Activated CD8-positive, alpha-beta T cell treated with anti-CD3 and anti-CD28 coated beads, Interleukin-2, amount 10 ng/mL, durations not matched to agents 7 days and 5 days (primary cell): ENCODE measurements at regions of chr17 and their contacts with region 1.

Region 1: DNA sequence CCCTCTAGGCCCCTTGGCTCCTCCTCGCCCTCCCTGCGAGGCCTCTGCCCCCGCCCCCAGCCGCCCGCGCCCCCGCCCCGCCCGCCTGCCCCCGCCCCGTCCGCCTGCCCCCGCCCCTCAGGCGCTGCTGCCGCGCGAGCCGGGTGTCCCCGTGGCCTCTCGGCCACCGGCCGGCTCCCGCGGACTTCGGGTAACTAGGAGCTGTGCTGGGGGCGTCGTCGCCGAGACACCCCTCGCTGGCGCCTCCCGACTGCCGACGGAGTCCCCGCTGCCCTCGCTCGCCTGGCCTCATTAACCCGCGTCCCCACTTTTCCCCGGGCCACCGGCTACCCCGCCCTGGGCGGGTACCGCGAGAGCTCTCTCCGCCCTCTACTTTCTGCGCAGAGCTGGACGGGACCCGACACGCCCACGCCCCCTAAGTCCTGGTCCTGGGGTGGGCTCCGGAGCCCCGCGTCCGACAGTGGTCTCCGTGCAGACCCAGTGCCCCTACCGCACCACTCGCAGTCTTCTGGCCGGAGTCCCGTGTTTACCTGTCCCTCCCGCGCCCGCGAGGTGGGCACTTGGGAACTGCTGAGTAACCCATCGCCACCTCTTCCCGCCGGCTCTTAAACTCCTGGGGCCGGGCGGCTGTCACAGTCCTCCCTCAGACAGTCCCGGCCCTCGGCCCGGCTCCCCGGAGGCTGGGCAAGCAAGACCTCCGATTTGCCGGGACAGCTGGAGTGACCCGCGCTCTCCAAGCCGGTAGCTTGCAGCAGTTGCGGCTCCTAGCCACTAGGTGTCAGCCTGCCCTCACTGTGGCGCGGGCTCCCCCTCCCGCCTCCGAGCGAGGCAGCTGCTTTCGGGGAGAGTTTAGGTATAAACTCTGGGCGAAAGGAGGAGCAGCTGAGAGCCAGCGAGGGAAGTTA is at the start of gene TLCD1:
- DNase-seq: peak; percentile 95
- ATAC-seq: peak; percentile 64
- H3K4me3 Mint-ChIP-seq: peak within 1 kb of the TSS; percentile 94
- H3K27ac Mint-ChIP-seq: peak within 1 kb of the TSS; percentile 99
- H3K4me1 Mint-ChIP-seq: peaks cover 64% of the 10 kb centered on the region
- H3K27me3 Mint-ChIP-seq: no peaks in the 10 kb centered on the region
- total RNA-seq, gene TLCD1: 2.8 to 3.0 TPM

Region 2: GRCh38 chr17:28661635-28662537 is 64.6 kb before region 1 on chr17 and contains the starts of genes SDF2 and SUPT6H:
- CTCF ChIA-PET with region 1: interaction called, 12 read pairs
- POLR2A ChIA-PET with region 1: interaction called, 11 read pairs
- DNase-seq: peak; percentile 96
- ATAC-seq: peak; percentile 90
- H3K4me3 Mint-ChIP-seq: peak within 1 kb of the TSS; percentile 99
- H3K27ac Mint-ChIP-seq: peak within 1 kb of the TSS; percentile 100
- H3K4me1 Mint-ChIP-seq: peaks cover 36% of the 10 kb centered on the region
- H3K27me3 Mint-ChIP-seq: no peaks in the 10 kb centered on the region
- total RNA-seq, gene SDF2: 51.7 to 54.5 TPM
- total RNA-seq, gene SUPT6H: 69.4 to 72.8 TPM

Region 3: GRCh38 chr17:28763804-28764266 is 37.4 kb after region 1 on chr17:
- CTCF ChIA-PET with region 1: interaction called, 132 read pairs
- POLR2A ChIA-PET with region 1: interaction called, 7 read pairs
- DNase-seq: peak; percentile 87
- ATAC-seq: peak; percentile 78
- H3K4me3 Mint-ChIP-seq: no peak overlapping the region
- H3K27ac Mint-ChIP-seq: no peak overlapping the region
- H3K4me1 Mint-ChIP-seq: peaks cover 16% of the 10 kb centered on the region
- H3K27me3 Mint-ChIP-seq: no peaks in the 10 kb centered on the region

Region 4: DNA sequence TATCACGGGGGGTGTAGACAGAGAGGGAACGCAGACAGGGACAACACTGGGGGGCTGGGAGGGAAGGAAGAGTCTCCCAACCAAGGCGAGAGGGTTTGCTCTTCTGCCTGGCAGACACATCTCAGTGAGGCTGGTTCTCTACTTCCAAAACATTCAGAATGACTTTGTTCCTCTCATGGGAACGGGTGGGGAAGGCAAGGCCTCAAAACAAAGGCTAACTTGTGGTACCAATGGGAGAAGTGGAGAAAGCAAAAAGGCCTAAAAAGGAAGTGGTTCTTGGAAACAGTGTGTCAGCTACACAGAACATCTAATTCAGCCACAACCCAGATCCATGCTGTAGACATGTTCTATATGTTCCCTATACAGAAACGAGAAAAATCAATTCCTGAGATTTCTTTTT is 163.5 kb after region 1 on chr17:
- CTCF ChIA-PET with region 1: interaction called, 19 read pairs
- POLR2A ChIA-PET with region 1: interaction called, 3 read pairs
- DNase-seq: no peak
- ATAC-seq: peak; percentile 31
- H3K4me3 Mint-ChIP-seq: peak overlapping the region; percentile 32
- H3K27ac Mint-ChIP-seq: peak overlapping the region; percentile 70
- H3K4me1 Mint-ChIP-seq: peaks cover 58% of the 10 kb centered on the region
- H3K27me3 Mint-ChIP-seq: no peaks in the 10 kb centered on the region

Region 5: DNA sequence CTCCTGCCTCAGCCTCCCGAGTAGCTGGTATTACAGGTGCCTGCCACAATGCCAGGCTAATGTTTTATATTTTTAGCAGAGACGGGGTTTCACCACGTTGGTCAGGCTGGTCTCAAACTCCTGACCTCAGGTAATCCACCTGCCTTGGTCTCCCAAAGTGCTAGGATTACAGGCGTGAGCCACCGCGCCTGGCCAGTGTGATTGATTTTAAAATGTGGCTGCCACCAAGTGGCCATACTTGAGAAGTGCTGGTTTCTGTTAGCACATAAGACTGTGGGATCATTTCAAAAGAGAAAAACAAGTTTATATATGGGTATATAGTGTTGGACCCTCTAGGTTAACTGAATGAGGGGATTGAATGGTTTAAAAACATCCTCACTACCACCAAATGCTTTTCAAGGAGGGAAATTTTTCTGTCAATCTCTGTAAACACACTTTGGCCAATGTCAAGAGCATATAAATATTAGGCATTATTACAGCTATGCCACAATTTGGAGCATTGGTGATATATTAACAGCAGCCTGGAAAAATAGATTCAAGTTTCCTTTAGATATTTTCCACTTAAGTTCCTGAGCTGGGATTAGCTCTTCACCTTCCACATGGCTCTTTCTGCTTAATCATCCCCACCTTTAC is 189.9 kb after region 1 on chr17:
- CTCF ChIA-PET with region 1: interaction called, 35 read pairs
- POLR2A ChIA-PET with region 1: no interaction called
- DNase-seq: peak; percentile 54
- ATAC-seq: peak; percentile 74
- H3K4me3 Mint-ChIP-seq: no peak overlapping the region
- H3K27ac Mint-ChIP-seq: no peak overlapping the region
- H3K4me1 Mint-ChIP-seq: no peaks in the 10 kb centered on the region
- H3K27me3 Mint-ChIP-seq: no peaks in the 10 kb centered on the region

Region 6: DNA sequence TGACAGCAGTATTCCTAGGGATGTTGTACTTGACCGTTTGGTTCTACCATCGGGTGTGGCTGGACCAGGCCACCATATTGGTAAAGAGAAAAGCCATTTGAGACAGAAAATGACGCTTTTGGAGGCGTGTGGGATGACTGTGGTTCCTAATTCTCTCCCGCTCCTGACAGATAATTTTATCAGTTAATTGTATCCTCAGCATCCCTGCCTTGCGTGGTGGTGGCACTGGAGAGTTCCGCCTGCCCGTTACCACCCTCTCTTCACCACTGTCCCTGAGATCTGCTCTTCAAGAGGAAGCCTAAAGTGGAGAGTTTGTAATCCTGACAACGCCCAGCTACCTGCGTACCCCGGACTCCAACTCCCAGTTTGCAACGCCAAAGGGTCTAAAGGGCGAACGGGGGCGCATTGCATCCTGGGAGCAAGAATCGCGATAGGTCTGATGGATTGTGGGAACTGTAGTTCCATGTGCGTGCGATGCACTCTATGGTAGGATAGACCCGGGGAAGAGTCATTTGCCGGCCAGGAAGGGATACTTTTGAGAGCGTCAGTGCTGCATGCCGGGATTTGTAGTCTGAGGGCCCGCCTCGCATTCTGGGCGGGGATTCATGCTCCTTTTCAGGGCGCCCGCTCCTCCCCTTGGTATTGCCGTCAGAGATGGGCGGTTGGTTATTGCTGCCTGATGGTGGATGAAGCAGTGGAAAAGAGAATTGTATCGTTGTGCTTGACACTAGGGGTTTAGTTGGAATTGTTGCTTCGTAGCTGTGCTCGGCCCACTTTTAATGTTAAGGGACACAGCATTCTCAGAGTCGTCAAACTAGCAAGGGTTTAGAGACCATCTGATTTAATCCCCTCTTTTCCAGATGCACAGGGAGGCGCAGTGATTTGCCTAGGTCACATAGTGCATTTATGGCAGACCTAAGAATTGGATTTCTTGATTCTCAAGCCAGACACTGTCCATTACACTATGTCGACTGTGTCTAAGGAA is 225.8 kb after region 1 on chr17:
- CTCF ChIA-PET with region 1: interaction called, 84 read pairs
- POLR2A ChIA-PET with region 1: interaction called, 16 read pairs
- DNase-seq: peak; percentile 98
- ATAC-seq: peak; percentile 76
- H3K4me3 Mint-ChIP-seq: no peak overlapping the region
- H3K27ac Mint-ChIP-seq: no peak overlapping the region
- H3K4me1 Mint-ChIP-seq: peaks cover 15% of the 10 kb centered on the region
- H3K27me3 Mint-ChIP-seq: no peaks in the 10 kb centered on the region